GM12878 (cell line): ENCODE measurements at regions of chr4 and their contacts with region 1.

Region 1: GRCh38 chr4:112642526-112642925 is 5.6 kb downstream of the LARP7 start:
- DNase-seq: no peak
- ATAC-seq: peak; percentile 17
- H3K4me3 ChIP-seq: no peak overlapping the region
- H3K27ac ChIP-seq: no peak overlapping the region
- H3K4me1 ChIP-seq: peaks cover 13% of the 10 kb centered on the region
- H3K27me3 ChIP-seq: no peaks in the 10 kb centered on the region
- CTCF ChIP-seq: no peak
- EP300 ChIP-seq: no peak
- POLR2A ChIP-seq: no peak
- RAD21 ChIP-seq: no peak

Region 2: GRCh38 chr4:112655270-112655669 is 12.7 kb after region 1 on chr4:
- CTCF ChIA-PET with region 1: interaction called, 8 read pairs
- POLR2A ChIA-PET with region 1: no interaction called
- RAD21 ChIA-PET with region 1: no interaction called
- SMC1A ChIA-PET with region 1: interaction called, 16 read pairs
- in situ Hi-C with region 1: no loop called
- intact Hi-C with region 1: no loop called
- DNase-seq: no peak
- ATAC-seq: no peak
- H3K4me3 ChIP-seq: no peak overlapping the region
- H3K27ac ChIP-seq: no peak overlapping the region
- H3K4me1 ChIP-seq: no peaks in the 10 kb centered on the region
- H3K27me3 ChIP-seq: no peaks in the 10 kb centered on the region
- CTCF ChIP-seq: no peak
- EP300 ChIP-seq: no peak
- POLR2A ChIP-seq: no peak
- RAD21 ChIP-seq: no peak